WTC11 (cell line): ENCODE measurements at regions of chr7 and their contacts with region 1.

Region 1: DNA sequence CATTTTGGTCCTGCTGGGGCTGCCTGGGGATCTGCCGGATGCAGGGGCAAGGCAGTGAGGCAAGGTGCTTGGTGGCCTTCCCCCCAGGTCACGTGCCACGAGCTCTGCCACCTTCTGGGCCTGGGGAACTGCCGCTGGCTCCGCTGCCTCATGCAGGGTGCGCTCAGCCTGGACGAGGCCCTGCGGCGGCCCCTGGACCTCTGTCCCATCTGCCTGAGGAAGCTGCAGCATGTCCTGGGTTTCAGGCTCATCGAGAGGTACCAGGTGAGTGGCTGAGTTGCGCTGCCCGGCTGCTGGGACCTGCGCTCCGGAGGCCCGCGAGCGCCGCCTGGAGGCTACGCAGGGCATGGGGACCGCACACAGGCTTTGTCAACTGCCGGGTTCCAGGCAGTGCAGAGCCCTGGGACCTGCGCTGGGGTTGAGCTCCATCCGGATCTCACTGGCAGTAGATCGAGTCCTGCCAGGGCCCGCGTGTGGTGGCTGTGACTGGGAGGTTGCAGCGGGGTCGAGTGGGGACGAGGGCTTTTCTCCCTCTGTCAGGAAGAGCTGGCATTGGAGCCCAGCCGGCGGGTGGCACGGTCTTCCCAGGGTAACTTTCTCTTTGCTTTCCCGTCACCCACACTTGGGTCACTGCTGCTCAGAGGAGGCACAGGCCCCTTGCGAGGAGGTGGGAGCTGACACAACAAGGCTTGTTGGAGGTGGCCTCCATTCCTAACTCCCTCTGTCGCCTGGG is 21.7 kb downstream of the AMZ1 start:
- DNase-seq: peak; percentile 91
- ATAC-seq: peak; percentile 94
- H3K4me3 Mint-ChIP-seq: no peak overlapping the region
- H3K27ac Mint-ChIP-seq: no peak overlapping the region
- H3K4me1 Mint-ChIP-seq: peaks cover 8% of the 10 kb centered on the region
- H3K27me3 Mint-ChIP-seq: no peaks in the 10 kb centered on the region
- CTCF ChIP-seq: peak; percentile 93

Region 2: GRCh38 chr7:2471396-2471795 is 238.3 kb before region 1 on chr7:
- CTCF ChIA-PET with region 1: interaction called, 16 read pairs
- POLR2A ChIA-PET with region 1: no interaction called
- DNase-seq: peak; percentile 55
- ATAC-seq: peak; percentile 33
- H3K4me3 Mint-ChIP-seq: no peak overlapping the region
- H3K27ac Mint-ChIP-seq: no peak overlapping the region
- H3K4me1 Mint-ChIP-seq: peaks cover 31% of the 10 kb centered on the region
- H3K27me3 Mint-ChIP-seq: no peaks in the 10 kb centered on the region
- CTCF ChIP-seq: no peak

Region 3: GRCh38 chr7:2608921-2609411 is 100.8 kb before region 1 on chr7:
- CTCF ChIA-PET with region 1: interaction called, 15 read pairs
- POLR2A ChIA-PET with region 1: interaction called, 3 read pairs
- DNase-seq: peak; percentile 73
- ATAC-seq: peak; percentile 63
- H3K4me3 Mint-ChIP-seq: no peak overlapping the region
- H3K27ac Mint-ChIP-seq: peak overlapping the region; percentile 22; the same call in 1 of the 2 replicates
- H3K4me1 Mint-ChIP-seq: peaks cover 20% of the 10 kb centered on the region
- H3K27me3 Mint-ChIP-seq: no peaks in the 10 kb centered on the region
- CTCF ChIP-seq: no peak

Region 4: DNA sequence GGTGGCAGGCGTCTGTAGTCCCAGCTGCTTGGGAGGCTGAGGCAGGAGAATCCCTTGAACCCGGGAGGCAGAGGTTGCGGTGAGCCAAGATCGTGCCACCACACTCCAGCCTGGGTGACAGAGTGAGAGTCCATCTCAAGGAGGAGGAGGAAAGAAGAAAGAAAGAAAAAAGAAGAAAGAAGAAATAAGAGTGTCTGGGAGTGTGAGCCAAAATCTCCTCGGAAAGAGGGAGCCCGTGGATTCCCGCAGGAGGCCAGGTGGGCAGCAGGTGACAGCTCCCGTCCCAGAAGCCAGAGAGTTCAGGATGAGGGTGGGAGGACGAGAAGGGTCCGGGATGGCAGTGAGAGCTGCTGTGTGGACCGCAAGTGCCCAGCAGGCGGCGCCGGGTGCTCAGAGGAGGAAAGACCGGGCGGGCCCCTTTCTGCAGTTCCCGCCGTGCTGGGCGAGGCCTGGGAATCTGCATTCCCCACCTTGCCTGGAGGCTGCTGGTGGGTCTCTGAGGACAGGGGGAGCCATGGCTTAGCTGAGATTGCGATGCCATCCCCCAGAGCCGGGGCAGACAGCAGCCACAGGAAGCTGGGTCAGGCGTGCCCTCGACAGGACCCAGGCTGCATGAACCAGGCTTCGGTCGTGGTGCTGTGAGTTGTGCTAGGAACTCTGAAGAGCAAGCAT is 38.9 kb before region 1 on chr7:
- CTCF ChIA-PET with region 1: interaction called, 59 read pairs
- POLR2A ChIA-PET with region 1: interaction called, 4 read pairs
- DNase-seq: peak; percentile 85
- ATAC-seq: peak; percentile 94
- H3K4me3 Mint-ChIP-seq: no peak overlapping the region
- H3K27ac Mint-ChIP-seq: no peak overlapping the region
- H3K4me1 Mint-ChIP-seq: no peaks in the 10 kb centered on the region
- H3K27me3 Mint-ChIP-seq: peaks cover 11% of the 10 kb centered on the region
- CTCF ChIP-seq: peak; percentile 77

Region 5: DNA sequence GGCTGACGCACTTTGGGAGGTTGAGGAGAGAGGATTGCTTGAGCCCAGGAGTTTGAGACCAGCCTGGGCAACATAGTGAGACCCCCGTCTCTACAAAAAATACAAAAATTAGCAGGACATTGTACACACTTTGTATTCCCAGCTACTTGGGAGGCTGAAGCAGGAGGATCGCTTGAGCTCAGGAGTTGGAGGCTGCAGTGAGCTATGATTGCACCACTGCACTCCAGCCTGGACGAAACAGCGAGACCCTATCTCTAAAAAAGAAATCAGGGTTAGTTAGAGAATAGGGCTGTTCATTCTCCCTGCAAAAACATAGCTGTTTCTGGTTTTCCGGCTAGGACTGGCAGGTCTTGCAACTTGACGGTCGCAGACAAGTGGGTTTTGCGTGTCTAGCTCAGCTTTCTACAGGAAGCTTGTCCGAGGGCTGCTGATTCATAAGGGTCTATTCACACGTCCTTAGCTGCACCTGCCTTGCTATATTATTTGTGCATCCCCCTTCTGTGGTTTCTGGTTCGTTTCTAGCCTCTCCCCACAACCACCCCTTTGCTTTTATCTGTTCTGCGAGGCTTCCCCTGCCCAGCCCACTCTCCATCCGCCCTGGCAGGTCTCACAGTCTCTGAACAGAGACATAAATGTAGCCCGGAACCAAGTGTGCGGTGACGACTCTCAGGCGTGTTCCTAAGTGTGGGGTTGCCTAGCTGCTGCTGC is 11.0 kb before region 1 on chr7:
- CTCF ChIA-PET with region 1: interaction called, 102 read pairs
- POLR2A ChIA-PET with region 1: no interaction called
- DNase-seq: no peak
- ATAC-seq: no peak
- H3K4me3 Mint-ChIP-seq: no peak overlapping the region
- H3K27ac Mint-ChIP-seq: no peak overlapping the region; the same call in 1 of the 2 replicates
- H3K4me1 Mint-ChIP-seq: 0 out of 2 replicates have a peak, but pooled peaks cover 3% of the 10 kb centered on the region
- H3K27me3 Mint-ChIP-seq: no peaks in the 10 kb centered on the region
- CTCF ChIP-seq: no peak

Region 6: DNA sequence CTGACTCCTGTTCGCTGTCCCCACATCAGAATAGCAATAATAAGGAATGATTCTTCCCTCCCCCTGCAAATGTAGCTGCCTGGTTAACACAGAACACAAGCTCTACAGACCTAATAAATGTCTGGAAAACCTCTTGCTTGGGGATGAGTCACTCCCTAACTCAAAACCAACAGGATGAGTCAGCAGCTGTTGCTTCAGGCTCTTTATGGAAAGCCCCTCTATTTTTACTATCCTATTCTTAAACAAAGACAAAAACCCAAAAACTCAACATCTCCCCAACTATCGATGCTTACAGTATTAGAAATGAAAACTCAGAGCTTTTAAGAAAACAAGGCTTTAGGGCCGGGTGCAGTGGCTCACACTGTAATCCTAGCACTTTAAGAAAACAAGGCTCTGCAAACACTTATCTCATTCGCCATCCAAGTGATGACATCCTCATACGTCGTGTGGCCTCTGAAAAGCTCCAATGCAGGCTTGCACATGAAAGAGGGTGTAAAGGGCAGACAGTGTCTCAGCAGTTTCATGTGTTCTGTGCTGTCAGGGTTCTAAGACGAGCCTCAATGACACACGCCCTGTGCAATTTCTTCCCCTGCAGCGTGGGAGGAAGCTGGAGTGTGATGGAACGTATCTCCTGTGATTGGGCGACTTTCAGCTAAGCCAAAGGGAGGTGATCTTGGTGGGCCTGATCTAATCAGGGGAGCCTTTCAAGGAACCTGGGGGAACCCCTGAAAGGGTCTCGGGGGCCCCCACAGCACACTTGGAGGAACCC is 48.4 kb after region 1 on chr7:
- CTCF ChIA-PET with region 1: interaction called, 15 read pairs
- POLR2A ChIA-PET with region 1: no interaction called
- DNase-seq: no peak
- ATAC-seq: no peak
- H3K4me3 Mint-ChIP-seq: no peak overlapping the region
- H3K27ac Mint-ChIP-seq: peak overlapping the region; percentile 21
- H3K4me1 Mint-ChIP-seq: peaks cover 43% of the 10 kb centered on the region
- H3K27me3 Mint-ChIP-seq: no peaks in the 10 kb centered on the region
- CTCF ChIP-seq: no peak

Region 7: DNA sequence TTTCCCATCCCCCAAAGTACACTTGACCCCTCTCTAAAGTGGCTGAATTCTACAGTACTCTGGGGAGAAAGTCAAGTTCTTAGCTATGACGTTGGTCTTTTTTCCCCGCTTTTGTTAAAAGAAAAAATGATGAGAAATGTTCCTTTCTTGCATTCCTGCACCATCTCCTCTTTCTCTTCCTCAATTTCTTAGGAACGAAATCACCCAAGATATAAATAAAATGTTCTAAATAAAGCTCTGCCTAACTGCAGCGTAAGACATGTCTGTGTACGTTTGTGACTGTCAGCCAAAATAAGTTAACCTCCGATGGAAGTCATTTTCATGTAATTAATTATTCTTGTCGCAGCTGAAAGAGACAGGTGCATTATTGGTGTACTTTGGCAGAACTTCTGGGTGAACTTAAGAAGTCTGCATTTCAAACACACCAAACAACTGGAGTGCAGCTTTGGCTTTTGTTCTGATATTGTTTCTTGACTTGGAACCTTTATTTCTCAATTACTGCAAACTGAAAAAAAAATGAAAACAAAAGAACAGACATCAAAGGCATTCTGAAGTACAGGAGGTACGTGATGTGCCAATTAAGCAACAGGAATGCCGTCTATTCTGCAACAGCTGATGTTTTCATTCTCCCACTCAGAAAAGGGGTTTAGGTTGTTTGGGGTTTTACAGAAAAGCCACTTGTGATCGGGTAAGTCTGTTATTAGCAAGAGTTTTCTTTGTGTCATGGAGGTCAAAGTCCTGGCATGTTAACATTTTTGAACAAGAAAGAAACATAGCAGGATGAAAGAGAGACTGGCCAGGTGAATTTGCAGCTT is 508.9 kb after region 1 on chr7:
- CTCF ChIA-PET with region 1: no interaction called
- POLR2A ChIA-PET with region 1: no interaction called
- DNase-seq: no peak
- ATAC-seq: no peak
- H3K4me3 Mint-ChIP-seq: no peak overlapping the region
- H3K27ac Mint-ChIP-seq: no peak overlapping the region
- H3K4me1 Mint-ChIP-seq: peaks cover 15% of the 10 kb centered on the region
- H3K27me3 Mint-ChIP-seq: no peaks in the 10 kb centered on the region
- CTCF ChIP-seq: no peak